SK-MEL-5 (cell line): ENCODE measurements at regions of chr11 and their contacts with region 1.

Region 1: GRCh38 chr11:123654566-123655081 is at the start of gene SCN3B:
- DNase-seq: peak; percentile 69
- total RNA-seq, gene SCN3B: 0.08 and 0.11 TPM in 2 replicates

Region 2: DNA sequence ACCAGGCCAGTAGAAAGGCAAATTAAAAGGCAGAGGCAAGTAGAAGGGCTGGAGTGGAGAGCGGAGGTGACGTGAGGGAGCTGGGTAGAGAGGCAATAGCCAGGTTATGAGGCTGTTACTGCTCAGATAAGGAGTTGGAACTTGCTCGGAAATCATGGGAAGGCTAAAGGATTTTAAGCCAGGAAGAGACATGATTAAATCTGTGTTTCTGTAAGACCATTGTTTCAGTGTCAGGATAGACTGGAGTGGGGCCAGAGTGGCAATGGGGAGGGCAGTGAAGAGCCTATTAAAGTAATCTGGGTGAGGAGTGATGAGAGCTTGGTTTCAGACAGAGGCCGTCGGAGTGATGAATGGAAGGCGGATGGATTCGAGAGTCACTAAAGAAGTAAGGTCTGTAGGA is 185.5 kb before region 1 on chr11:
- in situ Hi-C with region 1: no loop called
- DNase-seq: peak; percentile 83

Region 3: GRCh38 chr11:123719452-123719851 is 64.8 kb after region 1 on chr11:
- in situ Hi-C with region 1: loop called (anchors 10 kb)
- DNase-seq: no peak

Region 4: DNA sequence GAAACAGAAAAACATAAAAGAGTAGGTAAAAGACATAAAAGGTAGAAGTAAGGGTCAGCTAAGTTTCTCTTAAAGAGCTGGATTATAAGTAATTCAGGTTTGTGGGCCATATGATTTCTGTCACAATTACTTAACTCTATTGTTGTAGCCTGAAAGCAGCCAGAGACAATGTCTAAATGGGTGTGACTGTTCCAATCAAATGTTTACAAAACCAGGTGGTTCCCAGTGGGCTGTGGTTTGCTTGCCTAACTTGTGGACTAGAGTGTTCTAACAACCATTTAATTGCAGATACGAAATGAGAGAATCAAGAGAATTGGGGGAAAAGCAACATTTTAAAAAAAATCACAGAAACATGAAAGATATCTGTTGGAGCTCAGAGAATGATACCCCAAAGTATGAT is 128.9 kb after region 1 on chr11:
- in situ Hi-C with region 1: no loop called
- DNase-seq: no peak